GM10248 (cell line): ENCODE measurements at regions of chr3 and their contacts with region 1.

Region 1: DNA sequence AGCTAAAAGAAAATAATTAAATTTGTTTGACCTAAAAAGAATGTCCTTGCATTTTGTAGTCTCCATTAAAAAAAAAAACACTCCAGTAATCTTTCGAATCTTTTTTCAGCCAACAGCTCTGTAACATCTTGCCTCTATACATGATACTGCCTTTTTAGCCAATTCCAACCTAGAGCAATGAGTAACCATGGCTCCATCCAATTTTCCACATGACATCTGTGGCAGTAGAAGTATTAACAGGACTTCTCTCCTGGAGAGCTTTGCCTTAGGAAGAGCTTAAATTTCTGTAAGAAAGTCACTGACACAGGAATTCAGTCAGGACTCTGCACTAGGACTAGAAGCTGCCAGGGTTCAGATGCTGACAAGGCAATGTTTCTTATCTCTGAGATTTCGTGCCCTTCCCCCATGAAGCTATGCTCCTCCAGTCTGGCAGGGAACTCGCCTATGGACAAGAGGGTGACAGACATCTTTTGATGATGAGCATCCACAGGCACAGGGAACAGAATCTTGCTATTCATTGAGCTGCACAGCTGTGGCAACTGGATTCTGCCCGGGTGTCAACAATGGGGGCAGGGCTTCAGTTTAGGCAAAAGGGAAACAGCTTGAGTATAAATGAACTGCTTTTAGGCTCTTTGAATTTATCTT is 81.8 kb downstream of the ALCAM start:
- DNase-seq: no peak
- CTCF ChIP-seq: no peak

Region 2: DNA sequence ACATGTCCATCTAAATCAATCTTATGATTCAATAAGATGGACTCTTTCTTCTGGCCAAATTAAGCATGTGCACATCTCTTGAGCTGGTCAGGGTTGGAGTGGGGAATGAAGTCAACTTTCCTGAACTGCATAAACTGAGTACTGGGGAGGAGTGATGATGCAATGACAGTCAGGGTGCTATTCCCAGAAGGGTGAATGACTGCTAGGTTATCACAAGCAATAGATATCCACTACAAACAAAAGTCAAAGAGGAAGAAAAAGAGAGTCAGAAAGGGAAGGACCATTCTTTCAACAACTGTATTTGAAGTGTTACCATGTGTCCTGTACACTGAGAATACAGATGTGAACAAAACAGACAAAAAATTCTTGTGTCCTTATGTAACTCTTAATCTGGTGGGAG is 11.8 kb before region 1 on chr3:
- CTCF ChIA-PET with region 1: interaction called, 10 read pairs
- POLR2A ChIA-PET with region 1: no interaction called
- DNase-seq: no peak
- CTCF ChIP-seq: no peak